ENCODE measurements at regions of chrX and their contacts with region 1.

Region 1: DNA sequence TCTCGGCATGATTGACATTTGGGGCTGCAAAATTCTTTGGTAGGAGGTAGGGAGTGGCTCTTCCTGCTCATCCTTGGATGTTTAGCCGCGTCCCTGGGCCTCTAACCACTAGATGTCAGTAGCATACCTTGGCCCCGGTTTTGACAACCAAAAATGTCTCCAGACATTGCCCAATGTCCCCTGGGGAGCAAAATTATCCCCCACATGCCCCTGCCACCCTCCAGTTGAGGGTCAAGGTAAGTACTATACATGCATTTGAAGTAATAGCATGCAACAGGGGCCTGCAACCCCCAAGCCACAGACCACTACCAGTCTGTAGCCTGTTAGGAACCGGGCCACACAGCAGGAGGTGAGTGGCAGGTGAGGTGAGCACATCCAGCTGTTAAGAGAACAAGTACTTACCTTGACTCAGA is 17.6 kb upstream of the KIAA1210 start:
- DNase-seq: no peak
- ATAC-seq: peak in 1 of 4 donors; percentile 49
- H3K4me3 ChIP-seq: no peak overlapping the region
- H3K27ac ChIP-seq: no peak overlapping the region
- H3K4me1 ChIP-seq: no peaks in the 10 kb centered on the region
- H3K27me3 ChIP-seq: peaks cover 0 to 5% (median 0%) of the 10 kb centered on the region in 9 donors
- CTCF ChIP-seq: peak in 11 of 12 donors; percentile 20 to 53 (median 40)
- POLR2A ChIP-seq: no peak

Region 2: DNA sequence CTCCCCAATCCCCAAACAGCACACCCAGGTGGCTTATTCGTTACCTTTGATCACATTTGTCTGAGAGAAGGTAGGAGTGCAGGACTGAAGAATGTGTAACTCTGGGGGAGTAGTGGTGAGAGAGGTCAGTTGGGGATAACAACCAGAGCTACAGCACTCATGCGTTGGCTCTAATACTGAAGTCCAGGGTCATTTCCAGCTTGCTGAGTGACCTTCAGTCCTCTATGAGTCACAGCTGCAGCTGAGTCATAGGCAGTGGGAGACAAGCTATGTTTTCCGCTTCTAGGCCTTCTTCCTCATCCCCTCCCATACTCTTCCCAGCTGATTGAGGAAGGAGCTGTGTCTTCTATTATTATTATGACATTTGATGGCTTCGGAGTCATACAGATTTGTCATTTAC is 104.1 kb before region 1 on chrX:
- intact Hi-C with region 1: no loop called
- DNase-seq: peak in 4 of 5 donors; percentile 57 to 82 (median 69)
- ATAC-seq: peak; percentile 94 to 99 (median 98)
- H3K4me3 ChIP-seq: no peak overlapping the region
- H3K27ac ChIP-seq: peak overlapping the region in 10 of 12 donors; percentile 31 to 76 (median 58)
- H3K4me1 ChIP-seq: peaks cover 0 to 23% (median 8%) of the 10 kb centered on the region in 12 donors
- H3K27me3 ChIP-seq: peaks cover 0 to 3% (median 0%) of the 10 kb centered on the region in 9 donors
- CTCF ChIP-seq: no peak
- POLR2A ChIP-seq: no peak

Region 3: GRCh38 chrX:119194621-119195020 is 49.4 kb after region 1 on chrX:
- intact Hi-C with region 1: loop called in 2 of 10 experiments (anchors 10 kb)
- DNase-seq: no peak
- ATAC-seq: no peak
- H3K4me3 ChIP-seq: no peak overlapping the region
- H3K27ac ChIP-seq: no peak overlapping the region
- H3K4me1 ChIP-seq: no peaks in the 10 kb centered on the region
- H3K27me3 ChIP-seq: no peaks in the 10 kb centered on the region
- CTCF ChIP-seq: peak in 6 of 12 donors; percentile 8 to 37 (median 28)
- POLR2A ChIP-seq: no peak

Region 4: GRCh38 chrX:119211649-119212014 is 66.4 kb after region 1 on chrX:
- intact Hi-C with region 1: loop called in 7 of 10 experiments (anchors 5 to 10 kb)
- DNase-seq: peak in 2 of 5 donors; percentile 27 to 45
- ATAC-seq: peak; percentile 90 to 94 (median 92)
- H3K4me3 ChIP-seq: no peak overlapping the region
- H3K27ac ChIP-seq: peak overlapping the region in 6 of 12 donors; percentile 16 to 76 (median 52)
- H3K4me1 ChIP-seq: no peaks in the 10 kb centered on the region
- H3K27me3 ChIP-seq: peaks cover 0 to 16% (median 0%) of the 10 kb centered on the region in 9 donors
- CTCF ChIP-seq: no peak
- POLR2A ChIP-seq: no peak

Region 5: GRCh38 chrX:119222932-119223331 is 77.7 kb after region 1 on chrX:
- intact Hi-C with region 1: loop called in 7 of 10 experiments (anchors 5 to 10 kb)
- DNase-seq: no peak
- ATAC-seq: no peak
- H3K4me3 ChIP-seq: no peak overlapping the region
- H3K27ac ChIP-seq: no peak overlapping the region
- H3K4me1 ChIP-seq: no peaks in the 10 kb centered on the region
- H3K27me3 ChIP-seq: peaks cover 0 to 30% (median 0%) of the 10 kb centered on the region in 9 donors
- CTCF ChIP-seq: no peak
- POLR2A ChIP-seq: no peak

Measured in heart left ventricle (tissue), 16 donors.